ENCODE measurements at regions of chr11 and their contacts with region 1.

Region 1: DNA sequence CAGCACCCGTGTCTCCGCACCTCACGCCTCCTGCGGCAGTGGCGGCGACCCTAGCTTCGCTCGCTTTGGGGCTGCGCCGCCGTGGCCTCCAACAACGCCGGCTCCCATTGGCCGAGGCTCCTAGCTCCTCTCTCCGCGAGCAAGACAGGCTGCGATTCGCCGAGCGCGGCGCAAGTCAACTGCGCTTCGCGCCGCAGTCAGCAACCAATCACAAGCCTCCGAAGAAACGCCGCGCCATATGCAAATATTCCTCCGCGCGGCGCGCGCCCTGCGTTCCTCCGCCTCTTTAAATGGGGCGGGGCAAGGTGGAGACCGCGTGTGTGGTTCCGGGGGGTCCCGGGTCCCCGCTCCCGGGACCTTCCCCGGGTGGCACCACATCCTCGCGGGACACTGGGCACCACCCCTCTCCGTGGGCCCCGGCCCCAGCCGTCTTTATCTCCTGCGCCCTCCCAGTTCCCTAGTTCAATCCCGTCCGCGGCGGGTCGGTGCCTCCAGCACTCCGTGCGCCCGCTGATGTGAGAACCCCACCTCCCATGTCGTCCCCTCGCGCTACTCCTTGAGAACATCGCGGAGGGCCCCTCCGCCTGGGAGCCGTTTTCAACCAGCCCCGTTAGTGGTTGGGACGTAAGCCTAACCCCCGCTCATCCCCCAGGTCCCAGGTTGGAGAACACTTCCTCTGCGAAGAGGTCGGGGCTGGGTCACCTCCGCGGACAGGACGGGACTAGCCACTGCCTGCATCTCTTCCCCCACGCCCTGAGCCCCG is at the start of gene NAP1L4:
- DNase-seq: peak; percentile 93 to 96 (median 93)
- H3K4me3 ChIP-seq: peak within 1 kb of the TSS; percentile 75 to 90 (median 86)
- H3K4me3 Mint-ChIP-seq: peak within 1 kb of the TSS; percentile 97 to 99
- H3K27ac ChIP-seq: peak within 1 kb of the TSS; percentile 83 to 87
- H3K27ac Mint-ChIP-seq: peak within 1 kb of the TSS; percentile 94 to 99 (median 98)
- H3K4me1 ChIP-seq: peaks cover 38 to 48% of the 10 kb centered on the region in 2 donors
- H3K4me1 Mint-ChIP-seq: peaks cover 45% of the 10 kb centered on the region
- H3K27me3 ChIP-seq: no peaks in the 10 kb centered on the region
- H3K27me3 Mint-ChIP-seq: peaks cover 0 to 2% (median 1%) of the 10 kb centered on the region in 3 donors
- CTCF ChIP-seq: no peak
- polyA plus RNA-seq, gene NAP1L4: 42.1 to 44.9 (median 44.9) TPM

Region 2: DNA sequence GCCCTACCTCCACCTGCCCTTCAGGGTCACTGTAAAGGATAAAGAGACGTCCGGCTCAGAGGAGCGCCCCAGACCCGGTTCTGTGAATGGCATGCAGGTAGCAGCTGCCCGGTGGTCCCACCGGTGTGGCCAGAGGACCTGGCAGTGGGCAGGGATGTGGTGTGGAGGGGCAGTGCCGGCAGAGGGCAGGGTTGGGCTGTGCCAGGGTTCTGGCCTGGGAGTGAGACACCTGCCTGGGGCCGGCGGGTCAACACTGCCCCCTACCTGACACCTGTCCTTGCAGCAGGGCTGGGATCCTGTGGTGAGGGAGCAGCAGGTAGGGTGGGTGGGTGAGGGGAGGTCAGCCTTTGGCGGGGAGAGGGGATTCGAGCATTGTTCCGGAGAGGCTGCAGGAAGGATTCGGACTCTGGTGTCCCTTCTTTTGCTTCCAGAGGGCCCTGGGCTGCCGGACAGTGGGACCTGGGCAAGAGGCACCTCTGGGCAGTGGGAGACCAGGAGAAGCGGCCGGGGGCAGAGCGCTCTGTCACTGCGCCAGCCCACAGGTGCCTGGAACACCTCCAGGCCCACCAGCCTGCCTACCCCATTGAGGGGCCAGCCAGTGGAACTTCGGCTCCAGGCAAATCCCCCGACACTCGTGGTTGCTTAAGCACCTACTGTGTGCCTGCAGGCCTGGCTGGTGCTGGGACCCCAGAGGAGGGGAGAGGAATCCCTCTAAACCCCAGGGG is 61.5 kb before region 1 on chr11:
- intact Hi-C with region 1: loop called (anchors 5 kb)
- DNase-seq: peak; percentile 43 to 63 (median 61)
- H3K4me3 ChIP-seq: peak overlapping the region; percentile 38 to 73 (median 63)
- H3K4me3 Mint-ChIP-seq: peak overlapping the region; percentile 87 to 92
- H3K27ac ChIP-seq: peak overlapping the region; percentile 61 to 92
- H3K27ac Mint-ChIP-seq: peak overlapping the region; percentile 73 to 97 (median 96)
- H3K4me1 ChIP-seq: peaks cover 50 to 66% of the 10 kb centered on the region in 2 donors
- H3K4me1 Mint-ChIP-seq: peaks cover 41% of the 10 kb centered on the region
- H3K27me3 ChIP-seq: peaks cover 8 to 32% of the 10 kb centered on the region in 2 donors
- H3K27me3 Mint-ChIP-seq: peaks cover 32 to 53% (median 35%) of the 10 kb centered on the region in 3 donors
- CTCF ChIP-seq: peak; percentile 92

Region 3: DNA sequence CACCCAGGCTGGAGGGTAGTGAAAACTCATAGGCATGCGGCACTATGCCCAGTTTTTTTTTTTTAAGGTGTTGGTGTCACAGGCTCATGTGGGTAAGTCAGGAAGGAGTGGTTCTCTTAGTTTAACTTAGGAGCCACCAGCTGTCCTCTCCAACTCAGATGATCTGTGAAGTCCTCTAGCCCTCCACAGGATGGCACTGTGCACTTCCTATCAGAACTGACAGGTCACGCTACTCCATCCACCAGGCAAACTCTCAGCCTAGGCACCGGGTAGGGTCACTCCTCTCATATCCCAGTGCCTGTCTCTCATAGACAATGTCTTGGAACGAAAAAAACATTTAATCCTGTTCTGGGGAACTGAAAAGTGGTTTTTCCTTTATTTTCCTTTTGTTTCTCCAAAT is 16.8 kb before region 1 on chr11:
- intact Hi-C with region 1: loop called in 1 of 2 experiments (anchors 1 kb)
- DNase-seq: peak; percentile 33 to 54 (median 40)
- H3K4me3 ChIP-seq: no peak overlapping the region
- H3K4me3 Mint-ChIP-seq: no peak overlapping the region
- H3K27ac ChIP-seq: peak overlapping the region in 1 of 2 donors; percentile 34
- H3K27ac Mint-ChIP-seq: peak overlapping the region in 5 of 7 donors; percentile 19 to 55 (median 32)
- H3K4me1 ChIP-seq: no peaks in the 10 kb centered on the region
- H3K4me1 Mint-ChIP-seq: peaks cover 2% of the 10 kb centered on the region
- H3K27me3 ChIP-seq: no peaks in the 10 kb centered on the region
- H3K27me3 Mint-ChIP-seq: no peaks in the 10 kb centered on the region
- CTCF ChIP-seq: peak; percentile 70

Region 4: GRCh38 chr11:3022300-3022967 is 30.0 kb after region 1 on chr11:
- intact Hi-C with region 1: loop called in 1 of 2 experiments (anchors 1 kb)
- DNase-seq: peak; percentile 70 to 84 (median 82)
- H3K4me3 ChIP-seq: peak overlapping the region in 1 of 3 experiments; percentile 61
- H3K4me3 Mint-ChIP-seq: peak overlapping the region; percentile 66 to 91
- H3K27ac ChIP-seq: peak overlapping the region; percentile 76 to 77
- H3K27ac Mint-ChIP-seq: peak overlapping the region; percentile 85 to 93 (median 91)
- H3K4me1 ChIP-seq: peaks cover 28 to 33% of the 10 kb centered on the region in 2 donors
- H3K4me1 Mint-ChIP-seq: peaks cover 31% of the 10 kb centered on the region
- H3K27me3 ChIP-seq: no peaks in the 10 kb centered on the region
- H3K27me3 Mint-ChIP-seq: peaks cover 0 to 1% (median 0%) of the 10 kb centered on the region in 3 donors
- CTCF ChIP-seq: no peak

Region 5: DNA sequence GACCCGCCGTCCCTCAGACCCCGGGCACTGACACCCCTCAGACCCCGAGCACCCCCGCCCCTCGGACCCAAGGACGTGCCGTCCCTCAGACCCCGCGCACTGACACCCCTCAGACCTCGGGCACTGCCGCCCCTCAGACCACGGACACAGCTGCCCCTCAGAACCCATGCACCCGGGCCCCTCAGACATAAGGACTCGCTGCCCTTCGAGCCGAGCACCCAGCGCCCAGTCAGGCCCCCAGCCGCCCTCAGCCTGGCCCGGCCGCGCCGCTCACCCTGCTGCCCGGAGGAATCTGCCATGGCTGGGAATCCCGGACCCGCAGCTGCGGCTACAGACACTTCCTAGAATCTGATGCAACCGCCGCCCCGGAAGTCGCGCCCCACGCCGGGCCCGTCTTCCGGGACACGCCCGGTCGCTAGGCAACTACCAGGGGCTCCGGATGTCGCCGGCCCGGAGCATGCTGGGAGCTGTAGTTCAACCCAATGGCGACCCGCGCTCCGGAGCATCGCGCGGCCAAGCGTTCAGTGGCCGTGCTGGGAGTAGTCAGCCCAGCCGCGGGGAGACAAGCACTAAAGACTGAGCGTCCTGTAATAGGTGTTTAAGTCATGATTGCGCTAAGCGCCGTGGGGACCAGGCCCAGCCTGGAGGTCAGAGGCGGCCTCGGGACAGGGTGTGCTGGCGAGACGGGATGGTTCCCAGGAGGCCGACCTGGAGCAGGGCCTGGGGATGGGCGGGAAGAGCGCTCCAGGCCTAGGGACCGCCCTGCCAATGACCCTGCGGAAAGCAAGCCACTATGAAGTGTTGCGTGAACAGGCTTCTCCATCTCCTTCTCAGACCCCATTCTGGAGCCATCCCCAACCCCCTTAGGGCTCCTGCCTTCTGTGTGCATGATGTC is 64.9 kb after region 1 on chr11 and contains the start of gene CARS1:
- intact Hi-C with region 1: loop called in 1 of 2 experiments (anchors 2 kb)
- DNase-seq: peak; percentile 93 to 97 (median 97)
- H3K4me3 ChIP-seq: peak within 1 kb of the TSS; percentile 68 to 97 (median 84)
- H3K4me3 Mint-ChIP-seq: peak within 1 kb of the TSS; percentile 87
- H3K27ac ChIP-seq: peak within 1 kb of the TSS; percentile 16 to 92
- H3K27ac Mint-ChIP-seq: peak within 1 kb of the TSS; percentile 83 to 96 (median 86)
- H3K4me1 ChIP-seq: peaks cover 20 to 25% of the 10 kb centered on the region in 2 donors
- H3K4me1 Mint-ChIP-seq: peaks cover 33% of the 10 kb centered on the region
- H3K27me3 ChIP-seq: no peaks in the 10 kb centered on the region
- H3K27me3 Mint-ChIP-seq: peaks cover 2 to 7% (median 3%) of the 10 kb centered on the region in 3 donors
- CTCF ChIP-seq: no peak
- polyA plus RNA-seq, gene CARS1: 30.9 to 46.8 (median 35.7) TPM